Calu3 (cell line): ENCODE measurements at regions of chr6 and their contacts with region 1.

Region 1: DNA sequence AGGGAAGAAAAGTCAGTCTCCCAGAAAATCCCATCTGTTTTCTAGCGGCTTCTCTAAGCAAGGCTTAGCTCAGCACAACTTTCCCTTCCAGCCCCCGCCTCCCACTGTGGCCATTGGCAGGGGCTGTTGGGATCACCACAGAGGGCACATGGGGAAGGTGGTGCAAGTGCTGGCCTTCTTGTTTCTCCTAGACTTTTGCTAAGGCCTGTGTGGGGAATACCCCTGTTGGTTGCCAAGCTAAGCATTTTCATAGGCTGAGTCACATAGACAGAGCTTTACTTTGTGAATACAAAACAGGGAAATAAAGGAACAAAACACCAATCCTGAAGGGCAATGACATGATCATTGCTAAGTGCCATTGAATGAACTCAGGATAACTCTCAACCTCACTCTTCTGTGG is 32.4 kb upstream of the TIAM2 start:
- DNase-seq: peak; percentile 46
- H3K4me3 Mint-ChIP-seq: no peak overlapping the region
- H3K27ac Mint-ChIP-seq: peak overlapping the region; percentile 71
- H3K4me1 Mint-ChIP-seq: peaks cover 28% of the 10 kb centered on the region
- H3K27me3 Mint-ChIP-seq: no peaks in the 10 kb centered on the region
- CTCF ChIP-seq: no peak

Region 2: GRCh38 chr6:155079985-155080452 is 117.3 kb after region 1 on chr6:
- CTCF ChIA-PET with region 1: no interaction called
- intact Hi-C with region 1: loop called (anchors 10 kb)
- DNase-seq: no peak
- H3K4me3 Mint-ChIP-seq: no peak overlapping the region
- H3K27ac Mint-ChIP-seq: no peak overlapping the region
- H3K4me1 Mint-ChIP-seq: peaks cover 17% of the 10 kb centered on the region
- H3K27me3 Mint-ChIP-seq: no peaks in the 10 kb centered on the region
- CTCF ChIP-seq: no peak

Region 3: GRCh38 chr6:155207223-155207622 is 244.5 kb after region 1 on chr6:
- CTCF ChIA-PET with region 1: no interaction called
- intact Hi-C with region 1: no loop called
- DNase-seq: no peak
- H3K4me3 Mint-ChIP-seq: no peak overlapping the region
- H3K27ac Mint-ChIP-seq: no peak overlapping the region
- H3K4me1 Mint-ChIP-seq: no peaks in the 10 kb centered on the region
- H3K27me3 Mint-ChIP-seq: no peaks in the 10 kb centered on the region
- CTCF ChIP-seq: no peak